Activated CD8-positive, alpha-beta T cell treated with anti-CD3 and anti-CD28 coated beads, Interleukin-2, amount 10 ng/mL, durations not matched to agents 7 days and 5 days (primary cell): ENCODE measurements at regions of chr16 and their contacts with region 1.

Region 1: GRCh38 chr16:17416461-17417311 is 54.1 kb downstream of the XYLT1 start:
- DNase-seq: peak; percentile 73
- ATAC-seq: peak; percentile 96
- H3K4me3 Mint-ChIP-seq: peak overlapping the region; percentile 66
- H3K27ac Mint-ChIP-seq: peak overlapping the region; percentile 94
- H3K4me1 Mint-ChIP-seq: peaks cover 61% of the 10 kb centered on the region
- H3K27me3 Mint-ChIP-seq: no peaks in the 10 kb centered on the region

Region 2: GRCh38 chr16:17369421-17370222 is 47.1 kb before region 1 on chr16:
- CTCF ChIA-PET with region 1: interaction called, 21 read pairs
- POLR2A ChIA-PET with region 1: interaction called, 28 read pairs
- DNase-seq: peak; percentile 88
- ATAC-seq: peak; percentile 85
- H3K4me3 Mint-ChIP-seq: peak overlapping the region; percentile 80
- H3K27ac Mint-ChIP-seq: peak overlapping the region; percentile 99
- H3K4me1 Mint-ChIP-seq: peaks cover 93% of the 10 kb centered on the region
- H3K27me3 Mint-ChIP-seq: no peaks in the 10 kb centered on the region